Right cardiac atrium (tissue), 5 donors: ENCODE measurements at regions of chr9 and their contacts with region 1.

Region 1: DNA sequence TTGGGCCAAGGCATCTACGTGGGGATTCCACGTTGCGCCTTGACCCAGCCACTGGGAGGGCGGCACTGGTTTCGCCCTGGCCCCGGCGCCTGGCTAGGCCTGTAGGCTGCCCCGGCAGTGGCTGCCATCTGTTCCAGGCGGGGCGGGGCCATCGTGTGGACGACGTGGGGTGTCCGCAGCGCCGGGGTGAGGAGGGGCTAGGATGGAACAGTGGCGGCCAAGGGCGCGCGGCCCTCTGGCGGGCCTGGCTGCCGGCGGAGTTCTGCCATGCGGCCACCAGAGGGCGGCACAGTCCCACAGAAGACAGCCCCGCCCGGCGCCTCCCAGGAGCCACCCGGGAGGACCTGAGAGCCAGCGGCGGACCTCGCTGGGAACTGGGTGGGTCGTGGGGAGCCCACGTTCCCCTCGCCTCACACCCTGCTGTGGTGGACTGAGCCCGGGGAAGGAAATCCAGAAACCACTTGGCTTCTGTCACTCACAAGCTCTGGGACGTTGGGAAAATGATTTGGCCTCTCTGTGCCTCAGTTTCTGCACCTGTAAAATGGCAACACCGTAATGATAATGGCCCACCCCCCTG is 22.6 kb upstream of the RAPGEF1 start:
- DNase-seq: peak; percentile 75 to 91 (median 90)
- ATAC-seq: peak; percentile 95
- H3K4me3 ChIP-seq: no peak overlapping the region
- H3K27ac ChIP-seq: no peak overlapping the region
- H3K4me1 ChIP-seq: no peaks in the 10 kb centered on the region
- H3K27me3 ChIP-seq: no peaks in the 10 kb centered on the region

Region 2: DNA sequence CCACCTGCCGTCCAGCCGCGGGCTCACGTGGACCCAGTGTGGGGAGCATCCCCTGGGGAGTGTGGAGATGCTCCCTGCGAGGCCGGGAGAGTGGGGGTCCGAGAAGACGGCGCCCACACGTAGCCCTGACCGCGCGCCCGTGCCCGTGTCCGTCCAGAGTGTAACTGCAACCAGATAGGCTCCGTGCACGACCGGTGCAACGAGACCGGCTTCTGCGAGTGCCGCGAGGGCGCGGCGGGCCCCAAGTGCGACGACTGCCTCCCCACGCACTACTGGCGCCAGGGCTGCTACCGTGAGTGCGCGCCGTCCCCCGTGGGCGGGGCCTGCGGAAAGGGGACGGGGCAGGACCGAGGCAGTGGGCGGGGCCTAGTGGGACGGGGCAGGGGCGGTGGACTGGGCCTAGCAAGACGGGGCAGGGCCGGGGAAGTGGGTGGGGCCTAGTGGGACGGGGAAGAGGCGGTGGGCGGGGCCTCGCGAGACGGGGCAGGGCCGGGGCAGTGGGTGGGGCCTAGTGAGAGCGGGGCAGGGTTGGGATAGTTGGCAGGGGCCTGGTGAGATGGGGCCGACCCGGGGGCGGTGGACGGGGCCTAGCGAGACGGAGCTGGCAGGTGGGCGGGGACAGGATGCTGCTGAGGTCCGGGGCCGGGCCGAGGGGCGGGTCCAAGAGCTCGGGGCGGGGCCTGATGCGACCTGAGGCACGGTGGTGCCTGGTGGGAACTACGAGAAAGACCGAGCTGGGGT is 478.5 kb after region 1 on chr9:
- intact Hi-C with region 1: loop called in 1 of 4 experiments (anchors 5 kb)
- DNase-seq: peak; percentile 98 to 100 (median 99)
- ATAC-seq: peak; percentile 95
- H3K4me3 ChIP-seq: peak overlapping the region; percentile 91
- H3K27ac ChIP-seq: no peak overlapping the region
- H3K4me1 ChIP-seq: no peaks in the 10 kb centered on the region
- H3K27me3 ChIP-seq: no peaks in the 10 kb centered on the region

Region 3: DNA sequence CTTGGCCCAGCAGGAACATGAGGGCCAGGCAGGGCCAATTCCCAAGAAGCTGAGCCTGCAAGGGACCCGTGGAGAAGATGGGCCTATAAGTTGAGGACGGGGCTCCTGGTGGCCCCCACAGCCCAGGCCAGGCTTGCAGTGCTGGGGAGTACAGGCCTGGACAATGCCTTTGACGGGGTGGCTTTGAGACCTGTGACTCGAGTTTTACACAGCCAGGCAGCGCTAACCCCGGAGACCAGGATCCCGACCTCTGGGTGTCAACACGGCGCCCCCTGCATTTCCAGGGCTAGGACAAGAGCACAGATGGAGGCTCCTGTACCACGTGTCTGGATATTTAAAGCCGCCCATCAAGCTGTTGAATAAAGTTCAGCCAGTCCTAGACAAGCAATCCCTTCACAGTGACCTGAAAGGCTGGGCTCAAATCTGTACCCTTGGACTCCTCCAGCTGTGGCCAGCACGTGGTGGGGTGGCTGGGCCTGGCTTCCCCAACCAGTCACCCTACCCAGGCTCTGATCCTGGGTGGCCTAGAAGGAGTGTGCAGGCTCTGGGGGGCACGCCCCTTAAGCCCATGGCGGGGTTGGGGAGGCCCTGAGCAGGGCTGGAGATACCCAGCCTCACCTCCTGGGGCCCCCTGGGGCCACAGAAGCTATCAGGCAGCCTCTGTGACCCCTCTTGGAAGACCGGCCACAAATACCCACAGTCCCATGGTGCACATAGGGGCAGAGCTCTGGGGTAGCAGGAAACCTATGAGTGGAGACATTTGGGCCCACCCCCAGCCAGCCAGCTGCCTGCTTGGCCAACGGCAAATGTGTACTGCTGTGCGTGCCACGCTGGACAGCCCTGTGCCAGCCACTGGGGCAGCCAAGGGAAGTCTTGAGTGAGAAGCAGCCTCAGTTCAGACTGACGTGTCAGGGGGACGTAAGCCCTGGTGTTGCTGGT is 488.1 kb after region 1 on chr9:
- intact Hi-C with region 1: loop called in 2 of 4 experiments (anchors 5 kb)
- DNase-seq: no peak
- ATAC-seq: peak in 1 of 2 donors; percentile 17
- H3K4me3 ChIP-seq: no peak overlapping the region
- H3K27ac ChIP-seq: no peak overlapping the region
- H3K4me1 ChIP-seq: no peaks in the 10 kb centered on the region
- H3K27me3 ChIP-seq: no peaks in the 10 kb centered on the region

Region 4: DNA sequence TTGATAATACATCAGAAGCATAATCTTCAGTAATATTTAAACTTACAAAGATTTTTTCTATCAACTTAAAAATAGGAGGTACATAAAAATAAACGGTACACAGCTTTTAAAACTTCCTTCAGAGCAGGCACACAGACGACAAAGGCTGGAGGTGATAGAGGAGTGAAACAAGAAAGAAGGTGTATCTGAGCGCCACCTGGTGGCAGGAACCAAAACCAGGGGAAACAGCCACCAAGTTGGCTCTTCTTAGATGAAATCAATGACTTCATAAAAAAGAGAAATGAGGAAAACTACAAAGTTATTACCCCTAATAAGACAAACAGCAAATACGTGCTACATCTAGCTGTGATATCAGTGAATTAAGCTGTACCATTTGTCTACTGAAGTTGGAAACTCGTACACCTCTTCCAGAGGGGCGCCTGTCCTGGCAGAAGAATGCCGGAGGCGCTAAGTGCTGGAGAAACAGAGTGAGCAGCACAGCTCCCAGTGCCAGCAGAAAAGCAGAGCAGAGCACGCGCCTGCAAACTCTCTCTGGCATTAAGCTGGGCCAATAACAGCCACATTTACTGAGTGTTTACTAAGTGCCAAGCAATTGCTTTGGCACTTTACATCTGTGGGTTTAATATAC is 506.4 kb after region 1 on chr9:
- intact Hi-C with region 1: loop called in 1 of 4 experiments (anchors 5 kb)
- DNase-seq: peak; percentile 54 to 83 (median 83)
- ATAC-seq: peak; percentile 67 to 71
- H3K4me3 ChIP-seq: no peak overlapping the region
- H3K27ac ChIP-seq: no peak overlapping the region
- H3K4me1 ChIP-seq: no peaks in the 10 kb centered on the region
- H3K27me3 ChIP-seq: no peaks in the 10 kb centered on the region